Activated CD8-positive, alpha-beta T cell treated with anti-CD3 and anti-CD28 coated beads for 36 hours (primary cell): ENCODE measurements at regions of chr9 and their contacts with region 1.

Region 1: GRCh38 chr9:95736370-95736769 is 139.1 kb upstream of the ERCC6L2 start:
- DNase-seq: peak; percentile 17
- ATAC-seq: peak; percentile 42
- H3K4me3 Mint-ChIP-seq: no peak overlapping the region
- H3K27ac Mint-ChIP-seq: no peak overlapping the region
- H3K4me1 Mint-ChIP-seq: peaks cover 29% of the 10 kb centered on the region
- H3K27me3 Mint-ChIP-seq: peaks cover 8% of the 10 kb centered on the region
- CTCF ChIP-seq: peak; percentile 30

Region 2: DNA sequence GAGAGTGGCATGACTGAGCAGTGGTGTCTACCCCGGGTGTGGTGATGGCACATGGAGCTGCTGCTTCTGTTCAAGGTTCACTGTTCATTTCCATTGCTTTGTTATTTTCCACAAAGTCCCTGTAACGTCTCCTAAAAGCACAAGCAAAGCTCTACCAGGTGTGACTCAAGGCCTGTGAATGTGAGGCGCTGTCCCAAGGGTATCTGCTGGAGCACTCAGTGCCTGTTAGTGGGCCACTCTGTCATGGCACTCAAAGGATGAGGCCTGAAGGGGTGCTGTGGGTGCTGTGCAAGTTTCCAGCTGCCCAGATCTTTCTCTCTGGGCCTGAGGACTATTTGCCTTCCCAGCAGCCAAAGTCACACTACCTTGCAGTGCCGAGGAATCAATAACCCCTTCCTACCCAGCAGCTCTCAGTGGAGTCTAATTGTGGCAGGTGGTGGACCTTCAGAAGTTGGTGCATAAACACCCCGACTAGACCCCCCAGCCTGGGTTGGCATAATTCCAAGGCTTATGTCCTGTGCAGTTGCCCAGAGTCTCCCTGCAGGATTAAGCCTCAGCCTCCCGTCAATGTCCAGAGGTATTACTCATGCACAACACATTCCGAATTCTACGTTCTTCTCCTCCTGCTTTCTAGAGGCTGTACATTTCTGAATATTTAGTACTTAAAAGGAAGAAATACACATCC is 202.2 kb before region 1 on chr9:
- CTCF ChIA-PET with region 1: no interaction called
- POLR2A ChIA-PET with region 1: no interaction called
- intact Hi-C with region 1: no loop called
- DNase-seq: no peak
- ATAC-seq: no peak
- H3K4me3 Mint-ChIP-seq: no peak overlapping the region
- H3K27ac Mint-ChIP-seq: no peak overlapping the region
- H3K4me1 Mint-ChIP-seq: no peaks in the 10 kb centered on the region
- H3K27me3 Mint-ChIP-seq: peaks cover 6% of the 10 kb centered on the region
- CTCF ChIP-seq: no peak

Region 3: GRCh38 chr9:95746408-95747172 is 10.2 kb after region 1 on chr9:
- CTCF ChIA-PET with region 1: interaction called, 10 read pairs
- POLR2A ChIA-PET with region 1: no interaction called
- intact Hi-C with region 1: no loop called
- DNase-seq: no peak
- ATAC-seq: no peak
- H3K4me3 Mint-ChIP-seq: no peak overlapping the region
- H3K27ac Mint-ChIP-seq: no peak overlapping the region
- H3K4me1 Mint-ChIP-seq: peaks cover 14% of the 10 kb centered on the region
- H3K27me3 Mint-ChIP-seq: peaks cover 8% of the 10 kb centered on the region
- CTCF ChIP-seq: no peak

Region 4: DNA sequence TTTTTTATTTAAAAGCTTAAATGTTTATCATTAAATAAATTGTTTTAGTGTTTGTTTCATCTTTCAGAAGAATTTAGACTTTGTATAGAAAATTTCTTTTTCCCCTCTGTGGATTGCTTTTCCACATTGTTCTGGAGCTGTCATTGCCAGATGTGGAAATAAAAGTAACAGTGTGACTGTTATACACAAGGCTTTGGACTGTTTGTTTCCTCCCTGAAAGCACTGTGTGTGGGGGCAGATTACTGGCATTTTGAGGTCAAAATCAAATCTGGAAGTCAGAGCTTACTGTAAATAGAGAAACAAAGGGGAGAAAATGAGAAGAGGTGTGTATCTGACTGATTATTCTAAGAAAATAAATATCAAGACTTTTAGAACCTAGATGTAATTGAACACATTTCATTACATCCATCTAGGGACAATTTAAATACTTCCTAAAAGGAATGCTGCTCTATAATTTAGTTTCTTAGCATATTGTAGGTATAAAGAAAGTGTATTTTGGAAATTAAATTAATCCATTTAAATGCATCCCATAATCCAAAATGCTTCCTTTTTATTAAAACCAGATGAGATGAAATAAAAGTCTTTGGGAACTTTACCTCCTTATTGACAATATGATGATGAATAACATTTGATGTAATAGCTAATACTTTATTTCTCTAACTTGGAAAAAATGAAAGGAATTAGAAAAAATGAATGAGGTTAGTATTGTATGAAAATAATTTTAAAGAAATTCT is 191.1 kb after region 1 on chr9:
- CTCF ChIA-PET with region 1: no interaction called
- POLR2A ChIA-PET with region 1: no interaction called
- intact Hi-C with region 1: no loop called
- DNase-seq: no peak
- ATAC-seq: no peak
- H3K4me3 Mint-ChIP-seq: no peak overlapping the region
- H3K27ac Mint-ChIP-seq: no peak overlapping the region
- H3K4me1 Mint-ChIP-seq: peaks cover 2% of the 10 kb centered on the region
- H3K27me3 Mint-ChIP-seq: no peaks in the 10 kb centered on the region
- CTCF ChIP-seq: no peak